HCT116 (cell line): ENCODE measurements at regions of chr1 and their contacts with region 1.

Region 1: DNA sequence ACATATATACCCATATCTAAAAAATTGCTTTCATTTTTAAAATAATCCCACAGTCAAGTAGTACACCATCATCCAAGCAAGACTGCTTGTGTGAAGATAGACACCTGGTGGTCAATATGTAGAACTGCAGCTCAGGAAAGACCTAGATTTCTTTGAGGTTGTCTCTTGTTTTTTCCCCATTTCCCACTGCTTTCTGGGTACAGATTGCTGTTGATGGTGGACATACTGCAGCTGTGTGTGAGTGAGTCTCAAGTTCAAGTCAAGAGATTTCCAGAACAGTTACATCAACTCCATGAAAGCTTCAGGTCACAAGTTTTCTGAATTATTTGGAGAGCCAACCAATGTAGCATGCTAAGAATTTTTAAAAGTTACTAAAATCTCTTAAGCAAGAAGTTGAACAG is 306.4 kb downstream of the DUSP10 start:
- DNase-seq: peak; percentile 46
- ATAC-seq: peak; percentile 39
- H3K4me3 ChIP-seq: no peak overlapping the region
- H3K27ac ChIP-seq: no peak overlapping the region
- H3K4me1 ChIP-seq: peaks cover 26 to 41% of the 10 kb centered on the region in 2 experiments
- H3K27me3 ChIP-seq: no peaks in the 10 kb centered on the region
- CTCF ChIP-seq: peak; percentile 76 to 90 (median 83)
- POLR2A ChIP-seq: no peak
- RAD21 ChIP-seq: peak; percentile 88

Region 2: DNA sequence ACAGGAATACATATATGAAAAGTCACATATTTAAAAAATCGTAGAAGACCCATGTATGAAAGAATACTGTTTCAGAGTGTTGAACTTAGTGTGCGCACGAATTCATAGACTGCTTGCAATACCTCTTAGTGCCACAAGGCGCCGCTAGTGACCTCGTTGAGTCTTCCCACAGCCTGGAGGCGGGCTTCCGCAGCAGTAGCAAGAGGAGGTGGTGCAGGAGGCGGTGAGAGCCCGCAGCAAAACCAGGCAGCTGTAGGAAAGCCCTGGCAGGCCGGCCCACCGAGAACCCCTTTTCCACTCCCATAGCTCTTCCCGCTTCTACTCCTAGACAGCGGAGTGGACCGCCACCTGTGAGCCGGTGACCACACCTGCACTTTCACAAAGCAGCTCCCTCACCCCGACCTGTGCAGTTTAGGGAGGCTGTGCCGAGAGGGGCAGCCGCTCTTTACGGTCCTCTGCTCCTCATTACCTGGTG is 625.3 kb before region 1 on chr1:
- CTCF ChIA-PET with region 1: interaction called, 5 read pairs
- POLR2A ChIA-PET with region 1: no interaction called
- RAD21 ChIA-PET with region 1: no interaction called
- intact Hi-C with region 1: loop called (anchors 2 kb)
- DNase-seq: peak; percentile 38
- ATAC-seq: peak; percentile 95
- H3K4me3 ChIP-seq: no peak overlapping the region
- H3K27ac ChIP-seq: no peak overlapping the region
- H3K4me1 ChIP-seq: no peaks in the 10 kb centered on the region; a peak in 1 of 4 replicates
- H3K27me3 ChIP-seq: no peaks in the 10 kb centered on the region
- CTCF ChIP-seq: peak; percentile 66 to 87 (median 85)
- POLR2A ChIP-seq: no peak
- RAD21 ChIP-seq: peak; percentile 78

Region 3: DNA sequence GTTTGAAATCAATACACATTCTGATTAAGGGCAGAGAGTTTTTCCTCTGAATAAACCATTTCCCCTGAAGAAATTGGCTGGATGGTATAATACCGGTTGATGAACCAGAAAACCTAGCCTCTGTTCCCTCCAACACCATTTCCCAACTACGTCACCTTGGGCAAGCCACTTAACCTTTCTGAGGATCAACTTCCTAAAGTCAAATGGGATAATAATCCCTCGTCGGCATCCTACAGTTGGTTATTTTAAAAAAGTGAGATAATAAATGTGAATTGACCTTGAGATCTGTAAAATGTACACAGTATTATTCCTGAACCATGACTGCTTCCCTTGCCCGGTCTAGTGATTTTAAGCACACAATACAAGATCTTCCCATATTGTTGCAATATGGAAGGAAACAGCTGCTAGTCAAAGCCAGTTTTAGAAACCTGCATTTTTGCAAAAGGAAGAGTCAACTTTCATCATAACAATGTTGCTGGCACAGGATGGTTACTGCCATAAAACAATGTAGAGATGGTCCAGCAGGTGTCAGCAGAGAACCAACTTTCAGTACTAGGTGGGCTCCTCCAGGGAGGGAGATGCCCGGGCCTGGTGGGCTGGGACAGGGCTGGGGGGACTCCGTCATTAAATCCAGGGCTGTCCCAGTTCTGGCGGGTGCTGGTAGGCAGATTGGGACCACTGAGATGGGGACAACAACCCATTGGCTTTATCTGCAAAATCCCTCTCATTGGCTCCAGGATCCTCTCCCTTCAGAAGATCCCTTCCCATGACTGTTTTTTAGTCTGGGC is 561.4 kb before region 1 on chr1:
- CTCF ChIA-PET with region 1: interaction called, 3 read pairs
- POLR2A ChIA-PET with region 1: no interaction called
- RAD21 ChIA-PET with region 1: no interaction called
- intact Hi-C with region 1: loop called (anchors 1 kb)
- DNase-seq: peak; percentile 16
- ATAC-seq: peak; percentile 57
- H3K4me3 ChIP-seq: no peak overlapping the region
- H3K27ac ChIP-seq: no peak overlapping the region
- H3K4me1 ChIP-seq: peaks cover 0 to 4% of the 10 kb centered on the region in 2 experiments; a peak in 1 of 4 replicates
- H3K27me3 ChIP-seq: no peaks in the 10 kb centered on the region
- CTCF ChIP-seq: peak; percentile 62 to 82 (median 63)
- POLR2A ChIP-seq: no peak
- RAD21 ChIP-seq: peak; percentile 83

Region 4: DNA sequence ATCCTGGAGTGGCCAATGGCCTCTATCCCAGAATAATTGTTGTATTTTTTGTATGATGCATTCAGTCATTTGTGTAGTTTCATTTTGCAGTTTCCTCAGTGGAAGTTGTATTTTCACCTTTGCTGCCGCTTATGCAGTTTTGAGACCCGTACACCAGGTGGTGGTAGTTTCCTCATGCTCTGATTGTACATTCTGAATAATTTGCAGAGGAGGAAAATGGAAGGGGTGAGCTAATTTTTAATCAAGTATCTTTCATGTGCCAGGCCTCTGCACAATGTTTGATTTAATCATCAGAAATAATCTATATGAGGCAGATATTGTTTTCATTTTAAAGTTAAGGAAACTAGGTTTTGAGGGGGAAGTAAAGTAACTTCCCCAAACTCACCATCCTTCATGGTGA is 526.7 kb before region 1 on chr1:
- CTCF ChIA-PET with region 1: interaction called, 7 read pairs
- POLR2A ChIA-PET with region 1: no interaction called
- RAD21 ChIA-PET with region 1: no interaction called
- intact Hi-C with region 1: loop called (anchors 10 kb)
- DNase-seq: peak; percentile 1
- ATAC-seq: no peak
- H3K4me3 ChIP-seq: no peak overlapping the region
- H3K27ac ChIP-seq: no peak overlapping the region
- H3K4me1 ChIP-seq: no peaks in the 10 kb centered on the region
- H3K27me3 ChIP-seq: peaks cover 4% of the 10 kb centered on the region; the same call in 1 of the 2 replicates
- CTCF ChIP-seq: peak; percentile 45 to 53 (median 50); a peak in 5 of 6 replicates
- POLR2A ChIP-seq: no peak
- RAD21 ChIP-seq: peak; percentile 61

Region 5: DNA sequence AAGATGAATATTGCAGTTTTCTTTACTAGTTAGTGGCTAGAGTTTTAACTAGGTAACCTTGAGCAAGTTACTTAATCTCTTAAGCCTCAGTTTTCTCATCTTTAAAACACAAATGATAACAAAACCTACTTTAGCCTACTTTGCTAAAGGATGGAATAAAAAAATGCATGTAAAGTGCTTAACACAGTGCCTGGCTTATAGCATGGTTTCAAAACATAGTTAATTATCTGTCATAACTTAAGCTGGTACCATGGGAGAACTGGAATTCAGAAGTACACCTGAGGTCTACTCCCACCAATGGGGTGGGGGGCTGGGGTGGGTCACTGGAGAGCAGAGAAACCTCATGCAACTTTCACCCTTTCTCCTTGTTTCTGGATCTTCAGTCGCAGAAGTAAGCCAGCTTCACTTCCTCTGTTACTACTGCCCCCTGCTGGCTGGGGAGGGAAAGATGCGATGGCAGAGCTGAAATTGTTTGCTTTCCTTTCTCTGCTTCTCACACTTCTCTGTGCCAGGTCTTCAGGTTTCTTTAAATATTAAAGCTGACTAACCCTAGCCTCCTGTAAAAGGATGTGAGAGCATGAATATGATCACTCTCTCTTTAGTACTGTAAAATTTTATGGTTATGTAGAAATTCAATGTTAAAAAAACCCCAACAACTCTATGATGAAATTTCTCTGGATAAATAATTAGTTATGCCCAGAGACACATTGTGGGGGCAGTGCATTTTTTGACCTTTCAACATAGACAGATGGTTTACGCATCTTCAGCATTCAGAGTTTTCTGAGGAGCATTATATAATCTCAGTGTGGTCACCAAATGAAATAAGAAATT is 232.1 kb before region 1 on chr1:
- CTCF ChIA-PET with region 1: interaction called, 12 read pairs
- POLR2A ChIA-PET with region 1: no interaction called
- RAD21 ChIA-PET with region 1: no interaction called
- intact Hi-C with region 1: no loop called
- DNase-seq: peak; percentile 54
- ATAC-seq: peak; percentile 84
- H3K4me3 ChIP-seq: no peak overlapping the region
- H3K27ac ChIP-seq: no peak overlapping the region
- H3K4me1 ChIP-seq: no peaks in the 10 kb centered on the region
- H3K27me3 ChIP-seq: no peaks in the 10 kb centered on the region
- CTCF ChIP-seq: peak; percentile 63 to 88 (median 83)
- POLR2A ChIP-seq: no peak
- RAD21 ChIP-seq: peak; percentile 73

Region 6: DNA sequence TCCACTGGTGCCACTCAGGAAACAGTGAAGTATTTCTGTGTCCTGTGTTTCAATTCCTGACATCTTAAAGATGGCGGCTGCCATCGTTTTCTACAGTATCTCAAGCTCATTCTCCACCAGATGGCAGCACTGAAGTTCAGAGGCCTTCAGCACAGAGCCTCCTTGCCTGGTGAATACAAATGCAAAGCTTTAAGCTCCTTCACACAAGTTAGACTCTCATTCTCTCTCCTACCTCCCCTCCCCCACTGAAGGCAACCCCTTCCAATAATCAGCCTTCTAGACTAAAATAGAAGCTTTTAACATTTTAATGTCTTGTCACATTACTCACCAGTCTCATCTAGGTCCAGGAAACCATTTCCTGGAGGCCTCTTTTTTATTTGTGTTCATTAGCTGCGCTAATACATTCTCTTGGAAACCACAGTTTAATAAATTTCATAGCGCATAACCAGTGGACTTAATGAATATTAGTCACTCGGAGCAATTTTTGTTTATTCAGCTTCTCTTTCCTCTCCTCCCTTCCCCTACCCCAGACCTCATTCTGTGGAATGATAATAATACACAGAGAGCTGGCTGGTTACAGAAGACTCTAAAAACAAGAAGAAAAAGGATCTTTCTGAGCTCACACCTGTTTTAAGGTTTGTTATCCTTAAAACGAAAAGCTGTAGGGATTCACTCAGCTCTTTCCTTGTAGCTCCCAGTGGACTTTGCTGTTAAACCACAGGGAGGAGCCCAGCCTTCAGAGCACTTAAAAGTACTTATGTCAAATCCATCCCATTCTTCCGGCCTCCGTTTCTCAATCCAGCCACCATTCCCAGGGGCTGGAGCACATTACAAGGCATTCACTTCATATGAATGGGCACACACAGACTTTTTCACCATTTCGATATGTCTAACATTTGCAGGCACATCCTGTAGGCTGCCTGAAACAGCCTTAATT is 171.4 kb before region 1 on chr1:
- CTCF ChIA-PET with region 1: interaction called, 41 read pairs
- POLR2A ChIA-PET with region 1: no interaction called
- RAD21 ChIA-PET with region 1: interaction called, 4 to 8 read pairs
- intact Hi-C with region 1: loop called (anchors 2 kb)
- DNase-seq: peak; percentile 75
- ATAC-seq: peak; percentile 92
- H3K4me3 ChIP-seq: no peak overlapping the region
- H3K27ac ChIP-seq: no peak overlapping the region
- H3K4me1 ChIP-seq: no peaks in the 10 kb centered on the region
- H3K27me3 ChIP-seq: no peaks in the 10 kb centered on the region
- CTCF ChIP-seq: peak; percentile 54 to 67 (median 55); a peak in 5 of 6 replicates
- POLR2A ChIP-seq: no peak
- RAD21 ChIP-seq: peak; percentile 66